Esophagus squamous epithelium (tissue), 5 donors: ENCODE measurements at regions of chr9 and their contacts with region 1.

Region 1: DNA sequence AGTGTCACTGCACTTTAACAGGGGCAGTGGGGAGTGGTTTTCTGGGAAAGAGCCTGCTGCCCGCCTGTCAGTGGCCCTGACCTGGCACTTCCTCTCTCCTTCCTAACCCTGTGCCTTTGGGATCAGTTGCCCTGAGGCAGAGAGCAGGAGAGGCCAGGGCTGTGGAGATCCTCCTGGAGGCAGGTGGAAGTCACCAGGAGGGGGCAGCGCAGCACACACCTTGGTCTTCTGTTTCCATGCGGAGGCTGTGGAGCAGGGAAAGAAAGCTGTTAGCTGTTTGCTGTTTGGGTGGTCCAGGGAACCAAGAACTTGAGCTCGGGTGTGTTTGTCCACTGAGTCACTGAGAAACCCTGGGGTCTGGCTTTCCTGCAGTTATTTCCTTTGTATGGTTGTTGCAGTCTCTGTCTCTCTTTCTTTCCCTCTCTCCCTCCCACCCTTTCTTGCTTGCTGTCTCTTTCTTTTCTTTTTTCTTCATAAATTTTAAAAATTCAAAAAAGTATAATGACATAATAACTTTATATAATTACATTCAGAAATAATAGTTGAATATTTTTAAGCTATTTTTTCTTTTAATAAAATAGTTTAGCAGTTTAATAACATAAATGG is 28.1 kb downstream of the NTRK2 start:
- DNase-seq: no peak
- H3K4me3 ChIP-seq: no peak overlapping the region
- H3K27ac ChIP-seq: no peak overlapping the region
- H3K4me1 ChIP-seq: no peaks in the 10 kb centered on the region
- H3K27me3 ChIP-seq: no peaks in the 10 kb centered on the region
- CTCF ChIP-seq: peak in 5 of 6 experiments; percentile 63 to 81 (median 66)
- POLR2A ChIP-seq: no peak

Region 2: DNA sequence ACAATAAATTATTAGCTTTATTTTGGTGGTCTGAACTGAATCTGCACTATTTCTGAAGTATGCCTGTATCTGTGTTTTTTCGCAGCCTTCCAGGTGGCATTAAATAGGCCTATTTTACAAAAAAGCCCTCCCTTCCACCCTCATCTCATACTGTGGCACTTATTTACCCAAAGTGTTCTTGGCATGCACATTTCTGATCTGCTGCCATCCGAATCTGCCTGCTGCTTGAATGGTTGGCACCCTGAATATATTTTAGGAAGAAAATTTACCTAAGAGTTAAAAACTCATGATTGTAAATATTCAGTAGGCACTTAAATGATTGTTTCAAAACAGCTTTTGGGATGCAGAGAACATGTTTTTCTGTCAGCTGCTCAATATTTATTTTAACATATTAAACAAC is 507.2 kb before region 1 on chr9:
- intact Hi-C with region 1: no loop called
- DNase-seq: no peak
- H3K4me3 ChIP-seq: no peak overlapping the region
- H3K27ac ChIP-seq: no peak overlapping the region
- H3K4me1 ChIP-seq: no peaks in the 10 kb centered on the region
- H3K27me3 ChIP-seq: peaks cover 0 to 7% (median 0%) of the 10 kb centered on the region in 4 donors
- CTCF ChIP-seq: no peak
- POLR2A ChIP-seq: no peak

Region 3: GRCh38 chr9:84953797-84954705 is 256.4 kb after region 1 on chr9:
- intact Hi-C with region 1: loop called (anchors 10 kb)
- DNase-seq: no peak
- H3K4me3 ChIP-seq: no peak overlapping the region
- H3K27ac ChIP-seq: no peak overlapping the region
- H3K4me1 ChIP-seq: peaks cover 0 to 31% (median 13%) of the 10 kb centered on the region in 3 donors
- H3K27me3 ChIP-seq: no peaks in the 10 kb centered on the region
- CTCF ChIP-seq: peak; percentile 78 to 96 (median 90)
- POLR2A ChIP-seq: no peak